K562 (cell line): ENCODE measurements at regions of chr5 and their contacts with region 1.

Region 1: DNA sequence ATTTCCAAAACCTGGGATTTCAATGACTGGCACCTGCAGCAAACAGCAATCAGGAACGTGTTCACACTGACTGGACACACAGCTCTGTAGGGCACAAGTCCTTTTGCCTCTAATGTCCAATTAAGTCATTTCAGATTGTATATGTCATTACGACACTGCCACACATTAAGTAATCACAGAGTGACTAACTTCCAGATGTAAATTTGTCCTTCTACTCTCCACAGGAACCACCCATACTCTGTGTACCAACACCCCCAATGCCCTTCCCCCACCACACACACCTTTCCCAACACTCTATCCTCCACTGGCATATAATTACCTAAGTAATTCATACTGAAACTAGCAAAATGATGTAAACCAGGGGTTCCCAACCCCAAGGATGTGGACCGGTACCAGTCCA is 30.5 kb downstream of the LARS1 start:
- DNase-seq: no peak
- ATAC-seq: no peak
- H3K4me3 ChIP-seq: no peak overlapping the region
- H3K27ac ChIP-seq: no peak overlapping the region
- H3K4me1 ChIP-seq: no peaks in the 10 kb centered on the region
- H3K27me3 ChIP-seq: no peaks in the 10 kb centered on the region
- CTCF ChIP-seq: no peak
- EP300 ChIP-seq: no peak
- POLR2A ChIP-seq: no peak
- RAD21 ChIP-seq: no peak

Region 2: GRCh38 chr5:146130440-146131045 is 21.4 kb before region 1 on chr5:
- CTCF ChIA-PET with region 1: no interaction called
- POLR2A ChIA-PET with region 1: interaction called, 11 read pairs
- in situ Hi-C with region 1: no loop called
- intact Hi-C with region 1: no loop called
- DNase-seq: peak in 1 of 4 experiments; percentile 21
- ATAC-seq: peak; percentile 50; the same call in 2 of the 3 replicates
- H3K4me3 ChIP-seq: no peak overlapping the region
- H3K27ac ChIP-seq: no peak overlapping the region
- H3K4me1 ChIP-seq: no peaks in the 10 kb centered on the region
- H3K27me3 ChIP-seq: no peaks in the 10 kb centered on the region
- CTCF ChIP-seq: peak in 2 of 3 experiments; percentile 35 to 63; a peak in 4 of 6 replicates
- EP300 ChIP-seq: no peak
- POLR2A ChIP-seq: no peak
- RAD21 ChIP-seq: peak; percentile 58 to 72; a peak in 3 of 4 replicates